Motor neuron (in vitro differentiated cells): ENCODE measurements at regions of chr1 and their contacts with region 1.

Region 1: DNA sequence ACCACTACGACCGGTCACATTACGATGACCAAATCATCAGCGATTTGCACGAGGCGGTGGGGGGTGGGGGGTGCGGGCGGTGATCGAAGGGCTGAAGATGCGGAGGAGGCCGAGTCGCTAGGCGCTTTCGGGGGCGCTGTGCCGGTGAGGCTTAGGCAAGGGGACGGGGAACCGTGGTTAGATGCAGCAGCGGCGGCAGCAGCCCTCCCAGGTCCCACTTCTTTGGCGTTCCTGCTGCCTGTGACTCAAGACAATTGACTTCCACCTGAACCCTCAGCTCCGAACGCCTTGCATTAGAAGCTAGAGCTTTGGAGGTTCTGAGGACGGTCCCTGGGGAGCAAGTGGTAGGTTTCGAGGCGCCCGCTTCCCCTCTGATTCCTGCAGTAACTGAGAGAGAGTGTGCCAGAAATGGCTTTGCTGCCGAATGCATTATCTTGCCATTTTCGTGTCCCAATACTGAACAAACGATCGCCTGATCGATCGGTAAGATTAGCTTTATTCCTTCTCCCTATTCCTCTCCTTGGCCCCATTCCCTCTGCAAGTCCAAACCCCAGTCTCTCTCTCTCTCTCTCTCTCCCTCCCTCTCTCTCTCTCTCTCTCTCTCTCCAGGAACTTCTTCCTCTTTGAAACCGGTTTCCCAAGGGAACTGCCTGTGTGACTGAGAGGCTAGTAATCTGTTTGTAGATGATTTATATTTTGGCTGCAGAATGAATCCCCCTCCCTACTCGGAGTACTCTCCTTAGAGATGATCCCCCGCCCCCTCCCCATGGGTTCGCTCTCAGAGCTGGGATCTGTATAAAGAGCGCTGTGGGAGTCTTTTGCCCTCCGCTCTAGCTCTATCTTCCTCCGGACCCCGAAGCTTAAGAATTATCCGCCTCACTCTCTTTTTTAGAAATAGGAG is 735 bp upstream of the BRINP3 start:
- ATAC-seq: peak in 7 of 8 experiments; percentile 24 to 79 (median 76)
- H3K4me3 ChIP-seq: peak overlapping the region; percentile 42 to 57 (median 45)
- H3K27ac ChIP-seq: peak overlapping the region; percentile 71 to 75
- H3K4me1 ChIP-seq: peaks cover 9 to 24% of the 10 kb centered on the region in 2 donors

Region 2: DNA sequence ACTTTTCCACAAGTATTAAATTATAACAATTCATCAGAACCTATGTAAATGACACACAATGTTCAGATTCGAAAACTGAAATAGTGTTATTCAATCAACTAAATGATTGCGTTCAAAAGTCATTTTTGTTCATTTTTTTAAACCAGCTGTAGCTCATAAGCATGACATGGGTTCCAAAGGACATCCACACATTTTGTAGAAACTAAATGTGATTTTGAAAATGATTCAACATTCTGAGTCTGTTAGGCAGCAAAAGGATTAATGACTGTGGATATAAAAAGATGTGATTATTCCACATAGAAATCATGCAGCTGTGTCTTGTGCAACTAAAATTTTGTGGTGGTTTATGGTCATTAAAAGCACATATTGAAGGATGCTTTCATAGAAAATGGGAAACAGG is 205.2 kb before region 1 on chr1:
- in situ Hi-C with region 1: no loop called
- ATAC-seq: no peak
- H3K4me3 ChIP-seq: no peak overlapping the region
- H3K27ac ChIP-seq: no peak overlapping the region
- H3K4me1 ChIP-seq: no peaks in the 10 kb centered on the region

Region 3: GRCh38 chr1:192311281-192311680 is 1832.9 kb after region 1 on chr1:
- in situ Hi-C with region 1: loop called in 1 of 9 experiments (anchors 25 kb)
- ATAC-seq: peak in 3 of 8 experiments; percentile 53 to 80 (median 61)
- H3K4me3 ChIP-seq: no peak overlapping the region
- H3K27ac ChIP-seq: no peak overlapping the region
- H3K4me1 ChIP-seq: no peaks in the 10 kb centered on the region